AG04450 (cell line): ENCODE measurements at regions of chrX and their contacts with region 1.

Region 1: DNA sequence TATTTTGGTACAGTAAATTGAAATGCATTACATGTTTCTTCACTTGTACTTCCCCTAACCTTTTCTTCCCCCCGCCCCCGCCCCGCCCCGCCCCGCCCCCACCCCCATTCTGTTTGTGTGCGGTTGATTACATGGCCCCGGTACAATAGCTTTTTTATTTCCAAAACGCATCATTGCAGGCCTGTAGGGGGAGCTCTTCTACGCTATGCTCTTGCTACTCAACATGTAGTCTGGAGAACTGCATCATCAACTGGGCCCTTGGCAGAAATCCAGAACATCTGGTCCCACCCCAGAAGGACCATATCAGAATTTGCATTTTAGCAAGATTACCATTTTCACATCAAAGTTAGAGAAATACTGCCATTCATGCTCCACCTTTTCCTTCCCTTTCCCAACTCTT is 333.3 kb upstream of the DDX53 start:
- DNase-seq: no peak
- H3K4me3 ChIP-seq: no peak overlapping the region
- H3K27ac ChIP-seq: no peak overlapping the region
- H3K27me3 ChIP-seq: no peaks in the 10 kb centered on the region
- CTCF ChIP-seq: 0 out of 2 replicates have a peak, but pooled peaks have one; percentile 22

Region 2: GRCh38 chrX:22629105-22629725 is 37.2 kb before region 1 on chrX:
- CTCF ChIA-PET with region 1: no interaction called
- POLR2A ChIA-PET with region 1: no interaction called
- DNase-seq: peak; percentile 21
- H3K4me3 ChIP-seq: no peak overlapping the region
- H3K27ac ChIP-seq: no peak overlapping the region
- H3K27me3 ChIP-seq: no peaks in the 10 kb centered on the region
- CTCF ChIP-seq: no peak

Region 3: DNA sequence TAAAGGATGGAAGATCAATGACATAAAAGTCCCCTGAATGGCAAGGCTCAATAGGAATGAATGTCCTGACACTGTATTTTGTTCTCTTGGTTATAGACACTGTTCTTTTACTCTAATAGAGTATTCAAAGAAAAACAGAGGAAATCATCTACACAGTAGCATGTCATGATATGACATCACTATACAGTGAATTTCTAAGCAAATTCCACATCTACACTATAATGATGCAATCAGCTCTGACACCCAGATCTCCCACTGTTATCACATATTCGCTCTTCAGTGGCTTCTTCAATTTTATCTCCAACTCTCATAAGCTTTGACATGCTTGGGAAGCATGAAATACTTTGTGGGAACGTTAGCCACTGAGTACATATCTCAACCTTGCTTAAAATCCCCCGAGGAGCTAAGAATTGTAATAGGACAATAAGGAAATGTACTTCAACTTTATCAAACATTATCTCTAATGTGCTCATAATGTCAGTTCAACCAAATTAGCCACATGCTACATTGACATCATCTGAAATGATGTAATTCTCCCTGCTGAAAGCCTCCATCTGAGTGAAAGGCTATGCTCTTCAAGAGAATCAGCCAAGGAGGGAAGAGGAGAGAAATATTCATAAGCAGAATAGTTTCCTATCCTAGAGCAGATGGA is 528.6 kb after region 1 on chrX:
- CTCF ChIA-PET with region 1: interaction called, 10 read pairs
- POLR2A ChIA-PET with region 1: no interaction called
- DNase-seq: no peak
- H3K4me3 ChIP-seq: no peak overlapping the region
- H3K27ac ChIP-seq: no peak overlapping the region
- H3K27me3 ChIP-seq: no peaks in the 10 kb centered on the region
- CTCF ChIP-seq: no peak